Heart right ventricle (tissue), 16 donors: ENCODE measurements at regions of chr2 and their contacts with region 1.

Region 1: GRCh38 chr2:44981136-44982108 is 27.8 kb downstream of the SIX2 start:
- DNase-seq: peak; percentile 66 to 74
- ATAC-seq: peak; percentile 67 to 86 (median 82)
- H3K4me3 ChIP-seq: no peak overlapping the region
- H3K27ac ChIP-seq: no peak overlapping the region
- H3K4me1 ChIP-seq: no peaks in the 10 kb centered on the region
- H3K27me3 ChIP-seq: peaks cover 0 to 61% (median 33%) of the 10 kb centered on the region in 7 donors
- CTCF ChIP-seq: peak; percentile 74 to 95 (median 88)

Region 2: GRCh38 chr2:45014016-45014702 is 32.7 kb after region 1 on chr2:
- intact Hi-C with region 1: loop called in 1 of 10 experiments (anchors 1 kb)
- DNase-seq: peak; percentile 30 to 66
- ATAC-seq: peak in 7 of 8 donors; percentile 11 to 58 (median 41)
- H3K4me3 ChIP-seq: peak overlapping the region; percentile 14 to 56 (median 50)
- H3K27ac ChIP-seq: peak overlapping the region in 7 of 10 donors; percentile 13 to 69 (median 43)
- H3K4me1 ChIP-seq: peaks cover 13 to 45% (median 33%) of the 10 kb centered on the region in 9 donors
- H3K27me3 ChIP-seq: peaks cover 23 to 91% (median 87%) of the 10 kb centered on the region in 7 donors
- CTCF ChIP-seq: peak; percentile 42 to 83 (median 72)

Region 3: GRCh38 chr2:45435316-45435715 is 453.9 kb after region 1 on chr2:
- intact Hi-C with region 1: no loop called
- DNase-seq: no peak
- ATAC-seq: no peak
- H3K4me3 ChIP-seq: no peak overlapping the region
- H3K27ac ChIP-seq: no peak overlapping the region
- H3K4me1 ChIP-seq: no peaks in the 10 kb centered on the region
- H3K27me3 ChIP-seq: no peaks in the 10 kb centered on the region
- CTCF ChIP-seq: no peak

Region 4: DNA sequence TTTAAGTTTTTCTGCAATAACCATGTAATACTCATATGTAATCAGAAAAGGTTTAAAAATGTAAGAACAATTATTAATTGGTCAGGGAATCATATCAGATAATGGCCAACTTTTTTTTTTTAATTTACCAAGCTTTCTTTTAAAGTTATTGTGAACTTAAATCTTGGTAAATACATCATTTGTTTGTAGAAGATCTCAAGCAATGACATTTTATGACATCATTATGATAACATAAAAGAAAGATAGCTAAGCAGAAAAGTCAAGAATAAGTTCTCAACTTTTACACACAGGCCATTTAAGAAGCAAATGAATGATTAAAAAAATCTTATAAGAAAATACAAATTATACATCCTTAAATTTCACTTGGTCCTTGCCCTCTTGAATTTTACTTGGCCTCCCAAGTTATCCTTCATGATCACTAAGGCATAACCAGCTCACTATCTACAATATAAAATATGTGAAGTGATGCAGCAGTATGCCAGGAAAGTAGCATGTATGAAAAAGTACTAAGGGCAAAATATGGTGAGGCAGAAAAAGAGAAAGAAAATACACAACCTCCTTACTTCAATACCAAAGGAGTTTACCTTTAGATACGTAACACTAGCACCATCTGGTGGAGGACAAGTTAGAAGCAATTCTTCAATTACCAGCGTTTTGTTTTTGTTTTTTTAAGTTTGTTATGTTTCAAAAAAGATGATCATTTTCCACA is 513.0 kb after region 1 on chr2:
- intact Hi-C with region 1: loop called (anchors 1 to 2 kb)
- DNase-seq: peak in 1 of 2 donors; percentile 46
- ATAC-seq: no peak
- H3K4me3 ChIP-seq: no peak overlapping the region
- H3K27ac ChIP-seq: no peak overlapping the region
- H3K4me1 ChIP-seq: no peaks in the 10 kb centered on the region
- H3K27me3 ChIP-seq: no peaks in the 10 kb centered on the region
- CTCF ChIP-seq: peak; percentile 51 to 86 (median 79)